GM10248 (cell line): ENCODE measurements at regions of chr2 and their contacts with region 1.

Region 1: GRCh38 chr2:84925724-84926376 is 20.4 kb downstream of the TMSB10 start:
- DNase-seq: peak; percentile 84
- CTCF ChIP-seq: peak; percentile 99

Region 2: GRCh38 chr2:84459018-84459943 is 466.6 kb before region 1 on chr2 and contains the start of gene SUCLG1:
- CTCF ChIA-PET with region 1: interaction called, 12 read pairs
- POLR2A ChIA-PET with region 1: no interaction called
- DNase-seq: peak; percentile 92
- CTCF ChIP-seq: no peak

Region 3: DNA sequence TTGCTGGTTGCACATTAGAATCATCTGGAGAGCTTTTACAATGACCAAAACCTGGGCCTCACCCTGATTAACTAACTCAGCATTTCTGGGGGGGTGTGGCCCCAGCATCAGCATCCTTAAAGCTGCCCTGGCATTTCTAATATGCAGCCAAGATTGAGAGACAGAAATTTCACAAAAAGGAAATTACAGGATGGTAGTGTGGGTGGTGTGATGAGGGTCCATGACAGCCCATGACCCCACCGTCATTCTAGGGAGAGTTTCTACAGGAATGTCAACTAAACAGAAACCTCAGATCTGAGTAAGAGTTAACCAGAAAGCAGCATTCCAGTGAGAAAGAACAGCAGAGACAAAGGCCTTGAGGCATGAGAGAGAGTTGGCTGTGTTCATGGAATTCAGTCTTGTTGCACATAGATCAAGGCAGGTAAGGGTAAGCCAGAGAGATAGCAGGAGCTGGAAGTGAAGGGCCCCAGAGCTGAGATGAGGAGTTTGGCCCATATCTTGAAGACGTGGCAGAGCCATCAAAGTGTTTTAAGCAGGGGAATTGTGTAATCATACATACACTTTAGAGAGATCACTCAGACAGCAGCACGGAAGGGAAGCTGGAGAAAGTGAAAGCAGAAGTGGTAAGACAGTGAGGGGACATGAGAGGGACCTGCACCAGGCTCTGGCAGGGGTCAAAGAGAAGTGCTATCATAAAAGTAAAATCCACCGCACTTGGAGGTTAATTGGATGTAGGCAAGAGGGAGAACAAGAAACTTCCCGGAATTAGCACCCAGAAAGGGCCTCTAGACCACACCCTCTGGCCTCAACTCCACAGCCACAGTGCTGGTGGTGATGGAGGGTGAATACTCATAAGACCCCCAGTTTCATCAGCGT is 37.2 kb before region 1 on chr2:
- CTCF ChIA-PET with region 1: interaction called, 22 read pairs
- POLR2A ChIA-PET with region 1: no interaction called
- DNase-seq: peak; percentile 65
- CTCF ChIP-seq: no peak

Region 4: DNA sequence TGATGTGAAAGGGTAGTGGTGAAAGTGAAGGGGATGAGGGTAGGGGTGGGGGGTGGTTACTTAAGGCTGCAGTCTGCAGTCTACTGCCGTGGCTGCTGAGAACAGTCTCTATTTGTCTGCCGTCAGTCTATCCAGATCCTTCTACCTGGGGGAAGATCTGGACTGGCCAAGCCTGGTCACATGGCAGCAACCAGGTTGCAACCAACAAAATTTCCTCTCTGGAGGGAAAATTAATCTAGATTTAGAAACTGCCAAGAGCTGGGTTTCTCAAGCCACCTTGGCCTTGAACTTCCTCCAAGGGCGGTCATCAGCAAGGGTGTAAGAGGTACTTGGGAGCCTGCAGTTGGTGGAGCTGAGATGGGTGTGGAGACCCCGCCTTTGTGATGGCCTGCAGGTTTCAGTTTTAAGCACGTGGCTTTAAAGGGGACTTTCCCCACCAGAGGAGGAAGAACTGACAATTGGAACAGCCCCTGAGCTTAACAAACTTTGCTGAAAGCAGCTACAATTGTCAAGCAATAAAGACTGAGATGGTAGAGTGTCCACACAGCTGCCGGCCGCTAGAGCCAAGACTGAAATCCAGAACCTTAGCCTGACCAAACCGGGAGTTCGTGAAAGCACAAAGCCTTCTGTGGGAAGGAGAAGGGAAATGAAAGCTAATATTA is 13.7 kb after region 1 on chr2:
- CTCF ChIA-PET with region 1: interaction called, 312 read pairs
- POLR2A ChIA-PET with region 1: interaction called, 15 read pairs
- DNase-seq: peak; percentile 78
- CTCF ChIP-seq: no peak

Region 5: DNA sequence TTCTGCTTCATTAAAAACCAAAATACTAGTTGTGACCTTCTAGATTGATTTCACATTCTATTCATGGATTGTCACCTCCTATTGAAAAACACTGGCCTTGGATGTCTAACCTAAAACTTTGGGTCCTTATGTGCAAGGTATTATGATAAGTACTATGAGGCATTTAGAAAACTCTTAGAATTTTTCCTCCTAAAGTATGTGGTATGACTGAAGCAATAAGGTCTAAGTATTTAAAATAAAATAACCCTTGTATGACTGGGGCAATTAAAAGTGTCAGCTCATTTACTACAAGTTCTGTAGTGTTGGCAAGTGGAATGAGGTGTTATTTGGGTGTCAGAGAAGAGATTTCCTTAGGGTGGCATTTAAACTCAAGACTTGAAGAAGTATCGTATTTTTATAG is 60.2 kb after region 1 on chr2:
- CTCF ChIA-PET with region 1: interaction called, 24 read pairs
- POLR2A ChIA-PET with region 1: interaction called, 6 read pairs
- DNase-seq: no peak
- CTCF ChIP-seq: no peak

Region 6: DNA sequence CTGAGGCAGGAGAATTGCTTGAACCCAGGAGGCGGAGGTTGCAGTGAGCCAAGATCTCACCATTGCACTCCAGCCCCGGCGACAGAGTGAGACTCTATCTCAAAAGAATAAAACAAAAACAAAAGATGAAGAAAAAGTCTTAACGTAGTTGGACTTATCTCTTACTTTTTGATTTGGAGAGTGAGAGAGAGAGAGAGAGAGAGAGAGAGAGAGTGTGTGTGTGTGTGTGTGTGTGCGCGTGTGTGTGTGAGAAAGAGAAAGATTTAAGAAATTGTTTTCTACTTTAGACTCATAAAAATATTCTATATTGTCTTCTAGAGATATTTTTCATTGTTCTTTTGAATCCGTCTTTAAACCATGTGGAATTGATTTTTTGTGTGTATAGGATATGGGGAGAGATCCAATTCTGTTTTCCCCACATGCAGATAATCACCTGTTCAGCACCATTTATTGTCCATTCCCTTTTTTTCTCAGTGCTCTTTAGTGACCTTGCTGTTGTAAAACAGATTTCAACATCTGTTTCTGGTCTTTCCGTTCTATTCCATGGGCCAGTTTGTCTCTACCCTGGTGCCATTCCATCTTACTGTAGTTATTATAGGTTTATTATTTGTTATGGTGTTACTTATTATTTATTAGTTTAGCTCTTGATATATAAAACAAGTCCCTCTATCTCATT is 98.7 kb after region 1 on chr2:
- CTCF ChIA-PET with region 1: interaction called, 15 read pairs
- POLR2A ChIA-PET with region 1: no interaction called
- DNase-seq: no peak
- CTCF ChIP-seq: no peak